ENCODE measurements at regions of chr14 and their contacts with region 1.

Region 1: DNA sequence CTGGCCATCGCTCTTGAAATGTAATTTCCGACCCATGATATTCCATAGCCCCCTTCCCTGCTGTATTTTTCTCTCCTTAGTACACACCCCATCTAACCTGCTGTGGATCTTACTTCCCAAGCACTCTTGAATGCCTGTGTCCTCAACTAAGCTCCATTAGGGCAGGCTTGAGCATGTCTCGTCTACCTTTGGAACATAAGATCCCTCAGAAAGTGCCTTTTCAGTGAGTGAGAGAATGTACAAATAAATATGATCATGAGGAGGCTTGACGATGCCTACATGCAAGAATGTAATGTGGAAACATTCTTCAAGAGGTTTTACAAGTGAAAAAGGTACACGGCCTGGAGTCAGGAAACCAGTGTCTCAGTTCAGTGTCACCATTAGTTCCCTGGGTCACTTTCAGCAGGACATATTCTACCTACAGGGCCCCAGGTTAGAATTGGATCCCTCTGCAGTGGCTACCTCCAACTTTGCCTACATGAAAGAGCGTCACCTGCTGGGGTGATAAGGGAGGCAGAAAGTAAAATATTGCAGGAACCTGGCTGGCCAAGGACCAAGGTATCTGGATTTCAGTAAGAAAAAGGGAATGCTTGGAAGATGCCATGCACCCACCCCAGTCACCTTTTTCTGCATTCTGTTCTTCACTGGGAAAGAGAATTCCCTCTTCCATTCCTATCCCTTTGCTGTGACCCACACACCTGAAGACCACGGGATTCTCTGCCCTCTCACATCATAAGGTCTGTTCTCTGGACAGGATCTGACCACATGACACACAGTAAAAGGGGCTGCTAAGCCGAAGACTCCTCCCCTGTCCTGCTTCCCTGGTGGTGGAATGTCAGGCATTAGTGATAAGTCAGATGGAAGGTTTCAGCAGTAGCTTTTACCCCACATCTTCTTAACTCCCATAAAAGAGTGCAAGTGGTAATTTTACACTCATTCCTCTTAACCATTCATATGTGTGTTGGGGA is 24.6 kb upstream of the SERPINA1 start:
- DNase-seq: peak; percentile 53
- H3K4me3 Mint-ChIP-seq: no peak overlapping the region
- H3K27ac Mint-ChIP-seq: no peak overlapping the region
- H3K4me1 Mint-ChIP-seq: peaks cover 29% of the 10 kb centered on the region
- H3K27me3 Mint-ChIP-seq: peaks cover 11% of the 10 kb centered on the region
- CTCF ChIP-seq: peak; percentile 63

Region 2: DNA sequence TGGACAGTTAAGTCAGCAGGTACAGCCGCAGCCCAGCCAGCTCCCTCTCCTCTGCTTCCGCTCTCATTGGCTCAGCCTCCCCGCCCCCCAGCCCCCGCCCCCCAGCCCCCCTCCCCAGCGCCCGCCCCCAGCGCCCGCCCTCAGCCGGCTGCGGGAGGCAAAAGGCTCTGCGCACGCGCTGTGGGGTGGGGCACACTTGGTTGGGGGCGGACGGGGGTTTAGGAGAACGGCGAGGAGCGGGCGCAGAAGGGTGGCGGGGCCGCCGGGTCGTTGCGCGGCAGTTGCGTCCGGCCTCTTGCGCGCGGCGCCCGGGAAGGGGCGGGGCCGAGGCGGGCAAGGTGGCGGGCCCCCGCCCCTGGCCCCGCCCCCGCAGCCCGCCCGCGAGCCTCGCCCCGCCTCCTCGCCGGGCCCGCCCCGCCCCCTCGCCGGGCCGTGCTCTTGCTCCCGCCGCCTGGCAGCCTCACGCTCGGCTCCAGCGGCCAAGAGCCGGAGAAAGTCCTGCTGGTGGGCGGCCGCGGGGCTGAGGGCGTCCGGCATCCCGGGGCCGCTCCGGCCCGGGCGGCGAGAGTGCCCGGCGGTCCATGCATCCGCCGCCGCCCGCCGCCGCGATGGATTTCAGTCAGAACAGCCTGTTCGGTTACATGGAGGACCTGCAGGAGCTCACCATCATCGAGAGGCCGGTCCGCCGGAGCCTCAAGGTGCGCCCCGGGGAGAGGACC is 238.9 kb before region 1 on chr14 and contains the start of gene PPP4R4:
- CTCF ChIA-PET with region 1: no interaction called
- intact Hi-C with region 1: loop called (anchors 10 kb)
- DNase-seq: peak; percentile 86
- H3K4me3 Mint-ChIP-seq: peak within 1 kb of the TSS; percentile 69
- H3K27ac Mint-ChIP-seq: peak within 1 kb of the TSS; percentile 42
- H3K4me1 Mint-ChIP-seq: peaks cover 10% of the 10 kb centered on the region
- H3K27me3 Mint-ChIP-seq: peaks cover 70% of the 10 kb centered on the region
- CTCF ChIP-seq: no peak
- total RNA-seq, gene PPP4R4: 0.10 and 0.78 TPM in 2 replicates

Region 3: DNA sequence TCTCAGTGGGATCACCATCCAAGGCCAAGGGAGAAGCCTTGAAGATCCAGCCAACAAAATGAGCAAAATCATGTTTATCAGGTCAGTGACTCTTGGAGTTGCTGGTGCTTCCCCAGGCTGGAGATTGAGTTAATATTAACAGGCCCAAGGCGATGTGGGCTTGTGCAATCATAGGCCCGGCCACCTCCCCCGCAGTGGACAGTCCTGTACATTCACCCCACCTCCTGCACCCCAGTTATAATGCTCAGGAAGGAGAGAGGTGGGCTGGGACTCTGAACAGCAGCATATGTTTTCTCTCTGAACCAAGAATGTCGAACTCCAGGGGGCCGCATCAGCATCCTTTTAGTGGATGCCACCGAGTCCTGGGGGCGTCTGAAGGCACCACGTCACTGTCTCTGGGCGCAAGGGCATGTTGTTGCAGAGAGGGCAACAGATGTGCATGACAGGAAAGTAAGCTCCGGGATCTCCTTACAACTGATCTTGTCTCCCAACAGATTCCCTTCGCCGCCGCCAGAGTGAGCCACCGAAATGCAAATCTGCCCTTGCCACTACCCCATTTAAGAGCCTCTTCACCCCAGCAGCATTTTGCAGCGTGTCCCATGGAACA is 57.7 kb before region 1 on chr14:
- CTCF ChIA-PET with region 1: interaction called, 4 read pairs
- intact Hi-C with region 1: loop called (anchors 1 kb)
- DNase-seq: peak; percentile 48
- H3K4me3 Mint-ChIP-seq: no peak overlapping the region
- H3K27ac Mint-ChIP-seq: no peak overlapping the region
- H3K4me1 Mint-ChIP-seq: peaks cover 27% of the 10 kb centered on the region
- H3K27me3 Mint-ChIP-seq: no peaks in the 10 kb centered on the region
- CTCF ChIP-seq: no peak

Region 4: DNA sequence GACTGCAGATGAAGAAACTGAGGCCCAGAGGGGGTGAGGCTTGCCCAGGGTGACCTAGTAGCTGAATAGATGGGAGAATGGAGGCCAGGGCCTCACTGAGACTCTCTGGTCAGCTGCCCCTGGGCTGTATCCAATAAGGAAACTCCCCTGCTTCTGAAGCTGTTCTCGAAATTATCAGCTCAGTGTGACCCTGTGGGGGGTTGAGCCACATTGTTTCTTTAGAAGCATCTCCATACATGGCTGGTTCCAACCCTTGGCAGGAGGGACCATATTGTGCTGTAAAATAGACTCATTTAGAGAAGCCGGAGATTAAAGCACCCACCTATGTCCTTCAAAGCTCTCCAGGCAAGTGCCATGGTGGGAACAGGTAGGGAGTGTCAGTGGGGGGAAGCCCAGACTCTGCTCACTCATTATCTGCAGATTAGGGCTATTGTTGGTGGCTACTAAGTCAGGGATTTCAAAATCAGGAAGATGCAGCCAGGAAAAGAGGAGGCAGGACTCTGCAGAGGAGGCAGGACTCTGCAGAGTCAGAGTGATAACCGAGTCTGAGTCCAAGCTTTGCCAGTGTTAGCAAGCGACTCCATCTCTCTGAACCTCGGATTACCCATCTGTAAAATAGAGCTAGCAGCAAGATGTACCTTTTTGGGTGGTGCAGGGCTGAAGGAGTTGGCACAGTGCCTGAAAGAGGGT is 171.8 kb after region 1 on chr14:
- CTCF ChIA-PET with region 1: no interaction called
- intact Hi-C with region 1: no loop called
- DNase-seq: no peak
- H3K4me3 Mint-ChIP-seq: no peak overlapping the region
- H3K27ac Mint-ChIP-seq: peak overlapping the region; percentile 42
- H3K4me1 Mint-ChIP-seq: peaks cover 23% of the 10 kb centered on the region
- H3K27me3 Mint-ChIP-seq: no peaks in the 10 kb centered on the region
- CTCF ChIP-seq: no peak

Region 5: DNA sequence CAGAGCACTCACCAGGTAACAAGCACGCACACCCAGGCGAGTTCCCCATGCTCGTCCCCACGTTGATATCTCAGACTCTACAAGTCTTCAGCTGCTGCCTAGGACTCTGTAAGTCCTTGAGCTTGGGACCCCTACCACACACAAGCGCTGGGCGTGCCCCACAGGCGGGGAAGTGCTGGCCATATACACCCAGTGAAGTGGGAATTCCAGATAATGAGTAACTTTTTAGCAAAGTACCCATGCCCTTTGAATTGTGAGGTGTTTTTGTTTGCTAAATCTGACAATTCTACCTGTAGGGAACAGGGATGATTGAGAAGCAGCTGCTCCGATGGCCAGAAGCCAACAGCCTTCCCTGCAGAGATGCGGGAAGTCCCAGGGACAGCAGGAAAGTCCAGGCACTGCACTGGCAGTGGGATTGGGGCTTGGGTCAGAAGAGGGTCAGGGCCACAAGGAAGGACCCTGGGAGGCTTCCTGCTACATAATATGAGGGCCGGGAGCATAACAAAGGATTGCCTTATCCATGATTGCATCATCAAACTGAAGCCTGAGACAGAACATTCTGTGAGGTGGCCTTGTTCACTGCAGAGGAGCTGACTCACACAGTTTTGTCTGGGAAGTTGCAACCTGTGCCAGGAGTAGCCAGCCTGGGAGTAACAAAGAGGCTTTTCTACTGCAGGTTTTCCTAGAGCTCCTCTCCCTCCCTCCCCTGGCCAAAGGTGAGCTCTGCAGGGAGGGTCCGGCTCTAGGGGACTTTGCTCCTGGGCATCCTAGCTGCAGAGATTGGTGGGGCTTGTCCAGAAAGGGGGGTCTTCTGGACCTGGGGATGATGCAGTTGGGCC is 186.1 kb after region 1 on chr14:
- CTCF ChIA-PET with region 1: no interaction called
- intact Hi-C with region 1: no loop called
- DNase-seq: peak; percentile 91
- H3K4me3 Mint-ChIP-seq: peak overlapping the region; percentile 46
- H3K27ac Mint-ChIP-seq: peak overlapping the region; percentile 95
- H3K4me1 Mint-ChIP-seq: peaks cover 81% of the 10 kb centered on the region
- H3K27me3 Mint-ChIP-seq: no peaks in the 10 kb centered on the region
- CTCF ChIP-seq: peak; percentile 38